ENCODE measurements at regions of chr4 and their contacts with region 1.

Region 1: GRCh38 chr4:173334085-173334772 is at the start of gene HMGB2:
- DNase-seq: peak; percentile 99 to 100 (median 99)
- H3K4me3 ChIP-seq: peak within 1 kb of the TSS; percentile 94
- H3K4me3 Mint-ChIP-seq: peak within 1 kb of the TSS; percentile 95 to 100 (median 98)
- H3K27ac ChIP-seq: peak within 1 kb of the TSS; percentile 98
- H3K27ac Mint-ChIP-seq: peak within 1 kb of the TSS; percentile 88 to 99 (median 96)
- H3K4me1 ChIP-seq: peaks cover 22% of the 10 kb centered on the region
- H3K4me1 Mint-ChIP-seq: peaks cover 27 to 42% (median 39%) of the 10 kb centered on the region in 3 donors
- H3K27me3 ChIP-seq: no peaks in the 10 kb centered on the region
- H3K27me3 Mint-ChIP-seq: peaks cover 0 to 4% of the 10 kb centered on the region in 2 donors
- total RNA-seq, gene HMGB2: 341 to 342 TPM

Region 2: GRCh38 chr4:173318648-173319211 is 15.5 kb before region 1 on chr4:
- CTCF ChIA-PET with region 1: interaction called, 16 read pairs
- POLR2A ChIA-PET with region 1: interaction called, 20 read pairs
- DNase-seq: peak in 2 of 5 donors; percentile 10 to 19
- H3K4me3 ChIP-seq: no peak overlapping the region
- H3K4me3 Mint-ChIP-seq: no peak overlapping the region
- H3K27ac ChIP-seq: no peak overlapping the region
- H3K27ac Mint-ChIP-seq: peak overlapping the region in 1 of 8 donors; percentile 32
- H3K4me1 ChIP-seq: no peaks in the 10 kb centered on the region
- H3K4me1 Mint-ChIP-seq: peaks cover 0 to 3% (median 2%) of the 10 kb centered on the region in 3 donors
- H3K27me3 ChIP-seq: no peaks in the 10 kb centered on the region
- H3K27me3 Mint-ChIP-seq: no peaks in the 10 kb centered on the region

Measured in CD8-positive, alpha-beta memory T cell (primary cell).